T-cell (primary cell): ENCODE measurements at regions of chr16 and their contacts with region 1.

Region 1: GRCh38 chr16:67561824-67562525 is 351 bp upstream of the CTCF start:
- DNase-seq: peak; percentile 92 to 98 (median 96)
- ATAC-seq: peak; percentile 74 to 81 (median 76)
- H3K4me3 ChIP-seq: peak overlapping the region; percentile 55 to 67
- H3K4me3 Mint-ChIP-seq: peak overlapping the region; percentile 85 to 88 (median 86)
- H3K27ac ChIP-seq: peak overlapping the region; percentile 69
- H3K27ac Mint-ChIP-seq: peak overlapping the region; percentile 92 to 94
- H3K4me1 ChIP-seq: peaks cover 21 to 47% of the 10 kb centered on the region in 2 experiments
- H3K4me1 Mint-ChIP-seq: peaks cover 38 to 60% (median 45%) of the 10 kb centered on the region in 3 donors
- H3K27me3 ChIP-seq: no peaks in the 10 kb centered on the region
- H3K27me3 Mint-ChIP-seq: no peaks in the 10 kb centered on the region

Region 2: DNA sequence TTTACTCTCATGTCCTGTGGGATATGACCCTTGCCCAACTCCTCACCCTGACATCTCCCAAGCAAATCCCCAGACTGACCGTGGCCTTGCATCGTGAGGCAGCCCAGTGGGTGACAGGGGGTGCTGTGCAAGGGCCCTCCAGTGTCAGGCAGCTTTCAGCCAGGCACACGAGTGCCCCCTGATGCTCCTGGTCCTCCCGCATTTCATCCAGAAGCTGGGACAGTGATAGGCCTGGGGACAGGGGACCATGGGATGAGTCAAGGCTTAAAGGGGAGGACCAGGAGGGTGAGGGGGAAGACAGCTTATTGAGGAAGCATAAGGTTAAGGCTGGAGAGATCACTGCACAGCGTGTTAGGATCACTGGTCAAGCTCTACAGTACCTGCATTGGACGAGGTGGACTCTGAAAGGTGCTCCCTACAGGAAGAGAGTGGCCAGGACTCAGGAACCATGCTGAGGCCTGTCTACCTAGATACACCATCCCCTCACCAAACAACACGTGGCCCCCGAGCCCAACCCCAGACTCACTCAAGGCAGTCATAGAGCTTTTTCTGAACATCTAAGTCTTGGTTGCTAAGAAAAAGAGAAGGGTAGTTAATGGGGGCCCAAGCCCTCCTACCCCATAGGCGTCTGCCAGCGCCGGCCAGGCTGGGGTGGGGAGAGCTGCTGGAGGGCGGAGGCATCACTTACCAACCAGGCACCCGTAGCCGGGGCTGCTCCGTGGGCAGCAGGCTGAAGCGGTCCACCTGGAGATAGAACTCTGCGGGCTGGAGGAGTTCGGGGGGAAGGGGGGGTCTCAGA is 97.1 kb after region 1 on chr16:
- CTCF ChIA-PET with region 1: interaction called in 1 of 2 experiments, 13 read pairs
- POLR2A ChIA-PET with region 1: interaction called in 1 of 2 experiments, 3 read pairs
- DNase-seq: no peak
- ATAC-seq: no peak
- H3K4me3 ChIP-seq: peak overlapping the region; percentile 99 to 100
- H3K4me3 Mint-ChIP-seq: peak overlapping the region; percentile 89 to 93 (median 91)
- H3K27ac ChIP-seq: peak overlapping the region; percentile 100
- H3K27ac Mint-ChIP-seq: peak overlapping the region; percentile 72 to 78
- H3K4me1 ChIP-seq: peaks cover 5 to 33% of the 10 kb centered on the region in 2 experiments
- H3K4me1 Mint-ChIP-seq: peaks cover 13 to 36% (median 30%) of the 10 kb centered on the region in 3 donors
- H3K27me3 ChIP-seq: no peaks in the 10 kb centered on the region
- H3K27me3 Mint-ChIP-seq: no peaks in the 10 kb centered on the region